ENCODE measurements at regions of chr1 and their contacts with region 1.

Region 1: DNA sequence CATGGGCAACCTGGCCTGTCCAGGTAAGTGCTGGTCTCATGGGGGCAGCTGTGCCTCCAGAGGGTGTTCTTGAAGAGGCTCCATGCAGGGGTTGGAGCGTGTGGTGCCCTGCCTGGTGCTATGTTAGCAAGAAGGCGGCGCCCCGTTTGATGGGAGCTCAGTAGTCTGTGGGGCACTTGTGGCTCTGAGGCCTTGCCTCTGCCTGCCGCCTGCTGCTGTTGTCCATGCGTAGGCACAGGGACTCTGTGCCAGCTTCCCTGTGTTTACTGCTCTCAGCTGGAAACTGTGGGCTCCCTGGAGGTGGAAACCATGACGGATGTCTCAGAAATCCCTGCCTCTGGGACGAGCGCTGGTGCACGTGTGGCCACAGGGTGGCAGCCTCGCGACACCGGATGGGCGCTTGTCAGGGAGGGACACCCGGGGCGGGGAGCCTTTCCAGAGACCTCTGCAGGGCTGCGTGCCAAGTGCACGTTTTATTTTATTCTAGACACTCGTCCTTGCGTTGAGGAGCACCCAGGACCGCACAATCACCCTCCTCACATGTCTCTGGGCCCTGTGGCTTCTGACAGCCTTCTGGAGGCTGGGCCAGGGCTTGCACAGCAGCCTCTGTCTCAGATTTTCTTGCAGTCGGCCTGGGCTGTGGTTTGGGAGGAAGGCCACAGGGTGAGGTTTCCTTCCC is 27.1 kb downstream of the SNAP47 start:
- DNase-seq: peak; percentile 67
- H3K4me3 ChIP-seq: no peak overlapping the region
- H3K27ac ChIP-seq: no peak overlapping the region
- H3K4me1 ChIP-seq: peaks cover 4% of the 10 kb centered on the region
- CTCF ChIP-seq: peak; percentile 87

Region 2: GRCh38 chr1:227726924-227727599 is 35.3 kb before region 1 on chr1:
- CTCF ChIA-PET with region 1: no interaction called
- POLR2A ChIA-PET with region 1: no interaction called
- intact Hi-C with region 1: no loop called
- DNase-seq: no peak
- H3K4me3 ChIP-seq: no peak overlapping the region
- H3K27ac ChIP-seq: no peak overlapping the region
- H3K4me1 ChIP-seq: peaks cover 31% of the 10 kb centered on the region
- CTCF ChIP-seq: no peak

Region 3: DNA sequence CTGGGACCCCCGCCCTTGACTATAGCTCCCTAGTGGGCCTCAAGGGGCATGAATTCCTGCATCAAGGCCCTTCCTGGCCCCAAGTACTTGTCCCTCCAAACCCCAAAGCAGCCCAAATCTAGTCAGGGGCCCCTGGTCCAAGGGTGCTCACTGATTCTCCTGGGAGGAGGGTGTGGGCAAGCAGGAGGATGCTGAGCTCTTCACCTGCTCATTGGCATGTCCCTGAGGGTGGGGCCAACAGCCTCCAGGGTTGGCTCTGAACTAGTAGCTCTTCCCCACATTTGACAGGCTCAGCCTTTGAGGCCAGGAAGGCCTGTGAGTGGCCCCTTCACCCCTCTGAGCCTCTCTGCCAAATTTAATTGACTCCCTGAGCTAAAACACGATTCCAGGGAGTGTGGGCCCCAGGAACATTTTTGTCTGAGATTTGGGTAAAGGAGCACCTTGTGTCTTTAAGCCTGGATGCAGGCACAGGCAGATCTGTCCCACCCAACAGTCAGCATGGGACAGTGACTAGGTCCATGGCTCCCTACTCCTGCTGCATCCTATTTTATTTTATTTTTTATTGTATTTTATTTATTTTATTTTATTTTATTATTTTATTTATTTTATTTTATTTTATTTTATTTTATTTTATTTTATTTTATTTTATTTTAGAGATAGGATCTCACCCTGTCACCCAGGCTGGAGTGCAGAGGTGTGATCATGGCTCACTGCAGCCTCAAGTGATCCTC is 196.4 kb after region 1 on chr1:
- CTCF ChIA-PET with region 1: no interaction called
- POLR2A ChIA-PET with region 1: no interaction called
- intact Hi-C with region 1: loop called (anchors 1 kb)
- DNase-seq: no peak
- H3K4me3 ChIP-seq: no peak overlapping the region
- H3K27ac ChIP-seq: no peak overlapping the region
- H3K4me1 ChIP-seq: no peaks in the 10 kb centered on the region
- CTCF ChIP-seq: no peak